ENCODE measurements at regions of chr5 and their contacts with region 1.

Region 1: DNA sequence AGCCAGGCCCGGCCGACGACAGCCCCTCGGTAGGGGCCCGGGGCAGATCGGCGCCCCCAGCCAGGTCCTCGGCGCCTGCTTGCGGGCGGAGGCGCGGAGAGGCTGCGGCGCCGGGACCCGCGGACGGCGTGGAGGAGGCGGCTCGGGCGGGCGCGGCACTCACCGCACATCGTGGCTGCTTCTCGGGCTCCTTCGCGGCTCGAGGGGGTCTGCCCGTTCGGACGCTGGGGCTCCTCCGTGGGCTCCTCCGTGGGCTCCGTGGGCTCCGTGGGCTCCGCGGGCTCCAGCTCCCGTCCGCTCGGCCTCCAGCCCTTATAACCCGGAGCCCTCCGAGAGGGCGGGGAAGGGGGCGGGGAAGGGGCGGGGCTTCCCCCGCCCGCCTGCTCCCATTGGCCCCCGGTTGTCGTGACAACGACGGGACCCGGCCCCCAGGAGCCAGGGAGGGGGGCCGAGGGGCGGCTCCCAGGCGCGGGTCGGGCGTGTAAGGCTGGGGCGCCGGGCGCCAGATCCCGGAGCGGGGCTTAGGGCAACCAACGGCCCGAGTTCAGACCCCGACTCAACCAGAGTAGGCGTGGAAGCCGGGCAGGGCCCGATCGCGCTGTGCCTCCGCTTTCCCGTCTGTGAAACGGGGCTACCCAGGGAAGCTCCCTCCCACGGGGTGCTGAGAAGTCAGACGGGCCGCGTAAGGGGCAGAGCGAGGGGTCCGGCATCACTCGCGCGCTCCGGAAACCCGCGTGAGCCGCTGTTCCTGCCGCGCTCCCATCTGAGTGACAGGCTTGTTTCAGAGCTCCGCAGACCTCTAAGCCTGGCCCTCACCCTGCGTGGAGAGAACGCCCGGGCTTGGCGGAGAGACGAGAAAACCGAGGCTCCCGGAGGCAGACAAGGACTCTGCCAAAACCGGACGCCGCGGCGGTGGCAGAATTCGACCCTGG is at the start of gene GFPT2:
- DNase-seq: peak; percentile 35 to 91
- H3K4me3 ChIP-seq: peak within 1 kb of the TSS; percentile 83 to 88
- H3K27ac ChIP-seq: peak within 1 kb of the TSS; percentile 51 to 62
- H3K4me1 ChIP-seq: peaks cover 0 to 3% of the 10 kb centered on the region in 2 donors
- H3K27me3 ChIP-seq: no peaks in the 10 kb centered on the region
- CTCF ChIP-seq: no peak
- total RNA-seq, gene GFPT2: 25.2 TPM

Region 2: DNA sequence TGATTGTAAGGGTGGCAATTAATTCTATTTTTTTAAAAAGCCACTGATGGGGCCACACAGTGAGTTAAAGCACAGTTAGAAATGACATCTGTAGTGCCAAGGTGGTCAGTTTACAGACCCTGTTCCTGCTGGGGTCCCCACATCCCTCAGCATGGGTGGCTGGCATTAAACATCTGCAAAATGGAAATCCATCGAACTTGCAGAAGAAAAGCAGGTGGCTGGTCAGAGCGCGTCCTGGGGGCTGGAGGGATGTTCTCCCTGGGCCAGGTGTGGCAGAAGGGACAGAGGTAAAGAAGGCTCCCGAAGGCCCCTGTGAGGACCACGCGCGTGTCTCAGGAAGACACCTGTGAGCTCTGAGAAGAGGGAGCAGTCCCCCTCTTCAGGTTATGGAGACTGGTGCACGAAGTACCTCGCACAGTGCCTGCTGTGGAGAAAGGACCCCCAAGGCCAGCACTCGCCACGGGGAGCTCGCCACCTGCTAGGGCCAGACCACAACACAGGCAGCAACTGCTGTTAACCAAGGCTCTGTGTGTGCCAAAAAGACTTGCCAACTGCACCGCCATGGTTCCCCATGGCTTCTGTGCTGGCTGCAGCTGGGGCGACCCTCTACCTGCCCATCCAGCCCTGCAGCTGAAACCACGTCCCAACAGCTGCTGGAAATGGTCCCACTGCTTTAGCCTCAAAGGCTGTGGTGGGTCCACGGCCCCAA is 209.5 kb before region 1 on chr5:
- intact Hi-C with region 1: no loop called
- DNase-seq: peak in 1 of 2 donors; percentile 31
- H3K4me3 ChIP-seq: no peak overlapping the region
- H3K27ac ChIP-seq: no peak overlapping the region
- H3K4me1 ChIP-seq: no peaks in the 10 kb centered on the region
- H3K27me3 ChIP-seq: no peaks in the 10 kb centered on the region
- CTCF ChIP-seq: no peak

Region 3: GRCh38 chr5:180494060-180494509 is 140.8 kb after region 1 on chr5 and contains the start of gene CNOT6:
- intact Hi-C with region 1: loop called (anchors 1 kb)
- DNase-seq: peak; percentile 68 to 94
- H3K4me3 ChIP-seq: peak within 1 kb of the TSS; percentile 94 to 95
- H3K27ac ChIP-seq: peak within 1 kb of the TSS; percentile 84 to 98
- H3K4me1 ChIP-seq: peaks cover 4 to 15% of the 10 kb centered on the region in 2 donors
- H3K27me3 ChIP-seq: no peaks in the 10 kb centered on the region
- CTCF ChIP-seq: no peak
- total RNA-seq, gene CNOT6: 12.0 TPM

Region 4: GRCh38 chr5:181207214-181208107 is 854.1 kb after region 1 on chr5:
- intact Hi-C with region 1: loop called (anchors 10 kb)
- DNase-seq: peak in 1 of 2 donors; percentile 90
- H3K4me3 ChIP-seq: peak overlapping the region; percentile 53 to 72
- H3K27ac ChIP-seq: peak overlapping the region; percentile 87 to 88
- H3K4me1 ChIP-seq: peaks cover 4 to 13% of the 10 kb centered on the region in 2 donors
- H3K27me3 ChIP-seq: no peaks in the 10 kb centered on the region
- CTCF ChIP-seq: no peak